ENCODE measurements at regions of chr17 and their contacts with region 1.

Region 1: DNA sequence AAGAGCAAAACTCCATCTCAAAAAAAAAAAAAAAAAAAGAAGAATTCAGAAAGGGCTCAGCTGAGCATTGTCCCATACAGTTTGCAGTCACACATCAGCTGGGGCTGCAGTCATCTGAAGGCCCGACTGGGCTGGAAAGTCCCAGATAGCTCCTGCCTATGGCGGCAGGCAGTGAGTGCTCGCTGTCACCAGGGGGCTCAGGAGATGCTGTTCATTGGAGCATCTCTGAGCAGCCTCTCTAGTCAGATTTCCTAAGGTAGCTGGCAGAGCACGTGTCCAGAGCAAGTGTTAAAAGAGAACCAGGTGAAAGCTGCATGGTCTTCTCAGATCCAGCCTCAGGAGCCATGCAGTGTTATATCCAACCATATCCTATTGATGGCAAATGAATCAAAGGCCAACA is 75.8 kb downstream of the WSCD1 start:
- DNase-seq: no peak
- ATAC-seq: no peak
- H3K4me3 ChIP-seq: no peak overlapping the region
- H3K27ac ChIP-seq: no peak overlapping the region
- H3K4me1 ChIP-seq: no peaks in the 10 kb centered on the region
- H3K27me3 ChIP-seq: no peaks in the 10 kb centered on the region
- CTCF ChIP-seq: no peak

Region 2: DNA sequence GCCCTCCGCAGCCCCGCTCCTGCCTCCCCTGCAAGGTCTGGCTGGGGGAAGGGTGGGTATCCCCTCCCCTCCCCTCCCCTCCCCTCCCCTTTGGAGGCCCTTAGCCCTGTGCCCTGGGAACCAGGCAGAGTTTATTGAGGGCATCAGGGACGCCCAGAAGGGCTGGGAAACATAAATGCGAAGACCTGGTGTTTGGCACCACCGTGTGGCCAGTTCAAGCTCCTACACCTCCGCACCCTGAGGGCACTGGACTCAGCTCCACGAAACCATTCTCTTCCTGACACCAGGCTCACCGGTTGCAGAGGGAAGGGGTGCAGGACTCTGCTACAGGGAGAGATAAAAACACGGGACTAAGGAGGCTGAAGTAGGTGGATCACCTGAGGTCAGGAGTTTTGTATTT is 290.0 kb after region 1 on chr17:
- CTCF ChIA-PET with region 1: interaction called, 10 read pairs
- POLR2A ChIA-PET with region 1: no interaction called
- intact Hi-C with region 1: no loop called
- DNase-seq: peak; percentile 73
- ATAC-seq: peak; percentile 90
- H3K4me3 ChIP-seq: no peak overlapping the region
- H3K27ac ChIP-seq: no peak overlapping the region
- H3K4me1 ChIP-seq: no peaks in the 10 kb centered on the region
- H3K27me3 ChIP-seq: no peaks in the 10 kb centered on the region
- CTCF ChIP-seq: peak; percentile 70